Sigmoid colon (tissue), 7 donors: ENCODE measurements at regions of chr19 and their contacts with region 1.

Region 1: DNA sequence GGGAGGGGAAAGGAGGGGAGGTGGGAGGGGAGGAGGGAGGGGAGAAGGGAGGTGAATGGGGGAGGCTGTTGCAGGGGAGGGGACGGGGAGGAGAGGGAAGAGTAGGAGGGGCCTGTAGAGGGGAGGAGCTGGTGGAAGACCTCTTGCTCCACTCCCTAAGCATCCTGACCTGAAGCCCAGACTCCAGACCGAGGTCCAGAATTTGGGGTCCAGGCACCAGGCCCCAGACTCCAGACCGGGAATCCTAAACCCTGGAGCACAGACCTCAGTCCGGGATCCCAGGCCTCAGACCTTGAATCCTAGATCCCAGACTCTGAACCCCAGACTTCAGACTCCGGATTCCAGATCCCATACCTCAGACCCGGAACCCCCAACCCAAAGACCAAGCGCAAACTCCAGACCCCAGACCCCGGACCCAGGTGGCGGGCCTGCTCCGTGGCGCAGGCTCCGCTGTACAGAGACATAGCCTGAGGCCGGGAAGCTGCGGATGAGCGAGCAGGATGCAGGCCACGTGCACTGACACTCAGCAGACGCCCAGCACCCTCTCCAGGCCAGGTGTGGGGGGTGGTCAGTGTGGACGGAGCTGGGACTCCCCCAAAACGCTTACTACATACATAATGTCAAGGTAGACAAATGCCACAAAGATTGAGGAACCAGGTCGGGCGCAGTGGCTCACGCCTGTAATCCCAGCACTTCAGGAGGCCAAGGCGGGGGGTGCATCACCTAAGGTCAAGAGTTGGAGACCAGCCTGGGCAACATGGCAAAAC is 710 bp upstream of the BTBD2 start:
- DNase-seq: peak; percentile 97
- H3K4me3 ChIP-seq: peak overlapping the region in 3 of 4 donors; percentile 21 to 92 (median 76)
- H3K27ac ChIP-seq: peak overlapping the region; percentile 78 to 83 (median 80)
- H3K4me1 ChIP-seq: peaks cover 0 to 37% (median 35%) of the 10 kb centered on the region in 4 donors
- H3K27me3 ChIP-seq: no peaks in the 10 kb centered on the region
- CTCF ChIP-seq: no peak
- EP300 ChIP-seq: no peak
- POLR2A ChIP-seq: no peak

Region 2: DNA sequence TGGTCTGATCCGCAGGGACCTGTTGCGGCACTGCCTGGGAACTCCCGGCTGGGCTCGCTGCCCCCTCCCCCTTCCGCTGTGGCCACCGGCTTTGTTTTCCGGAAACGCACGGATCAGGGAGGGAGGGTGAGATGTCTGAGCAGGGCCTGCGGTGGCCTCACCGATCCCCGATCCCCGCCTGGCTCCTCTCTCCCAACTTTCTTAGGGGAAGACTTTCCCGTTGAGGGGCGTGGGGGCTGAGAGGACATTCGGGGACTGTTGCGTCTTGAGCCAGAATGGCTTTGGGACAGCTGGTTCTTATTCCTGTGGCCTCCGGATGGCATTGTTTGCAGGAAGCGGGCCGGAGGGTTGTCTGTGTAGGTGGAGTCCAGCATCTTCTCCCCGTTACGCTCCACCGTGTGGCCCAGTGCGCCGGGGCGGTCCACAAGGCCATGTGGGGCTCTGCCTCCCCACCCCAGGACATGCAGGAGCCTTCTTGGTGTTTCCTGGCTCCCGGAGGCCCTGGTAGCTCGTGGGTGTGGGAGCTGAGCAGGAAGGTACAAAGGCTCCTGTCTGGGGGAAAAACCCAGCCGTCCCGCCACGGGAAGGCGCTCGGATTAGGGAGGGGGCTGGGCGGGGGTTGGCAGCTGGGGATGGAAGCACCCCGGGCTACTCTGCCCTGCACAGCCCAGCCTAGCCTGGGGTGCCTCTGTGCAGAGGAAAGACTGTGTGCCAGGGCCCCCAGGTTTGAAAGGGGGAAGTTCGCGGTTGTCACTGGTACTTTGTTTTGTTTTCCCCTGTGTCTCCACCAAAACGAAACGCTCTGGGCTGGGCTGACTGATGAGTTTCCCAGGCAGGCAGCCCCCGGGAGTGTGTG is 73.9 kb before region 1 on chr19:
- intact Hi-C with region 1: loop called (anchors 2 kb)
- DNase-seq: peak; percentile 88
- H3K4me3 ChIP-seq: peak overlapping the region; percentile 70 to 83 (median 81)
- H3K27ac ChIP-seq: peak overlapping the region; percentile 85 to 99 (median 97)
- H3K4me1 ChIP-seq: peaks cover 0 to 43% (median 38%) of the 10 kb centered on the region in 4 donors
- H3K27me3 ChIP-seq: no peaks in the 10 kb centered on the region
- CTCF ChIP-seq: no peak
- EP300 ChIP-seq: no peak
- POLR2A ChIP-seq: no peak

Region 3: DNA sequence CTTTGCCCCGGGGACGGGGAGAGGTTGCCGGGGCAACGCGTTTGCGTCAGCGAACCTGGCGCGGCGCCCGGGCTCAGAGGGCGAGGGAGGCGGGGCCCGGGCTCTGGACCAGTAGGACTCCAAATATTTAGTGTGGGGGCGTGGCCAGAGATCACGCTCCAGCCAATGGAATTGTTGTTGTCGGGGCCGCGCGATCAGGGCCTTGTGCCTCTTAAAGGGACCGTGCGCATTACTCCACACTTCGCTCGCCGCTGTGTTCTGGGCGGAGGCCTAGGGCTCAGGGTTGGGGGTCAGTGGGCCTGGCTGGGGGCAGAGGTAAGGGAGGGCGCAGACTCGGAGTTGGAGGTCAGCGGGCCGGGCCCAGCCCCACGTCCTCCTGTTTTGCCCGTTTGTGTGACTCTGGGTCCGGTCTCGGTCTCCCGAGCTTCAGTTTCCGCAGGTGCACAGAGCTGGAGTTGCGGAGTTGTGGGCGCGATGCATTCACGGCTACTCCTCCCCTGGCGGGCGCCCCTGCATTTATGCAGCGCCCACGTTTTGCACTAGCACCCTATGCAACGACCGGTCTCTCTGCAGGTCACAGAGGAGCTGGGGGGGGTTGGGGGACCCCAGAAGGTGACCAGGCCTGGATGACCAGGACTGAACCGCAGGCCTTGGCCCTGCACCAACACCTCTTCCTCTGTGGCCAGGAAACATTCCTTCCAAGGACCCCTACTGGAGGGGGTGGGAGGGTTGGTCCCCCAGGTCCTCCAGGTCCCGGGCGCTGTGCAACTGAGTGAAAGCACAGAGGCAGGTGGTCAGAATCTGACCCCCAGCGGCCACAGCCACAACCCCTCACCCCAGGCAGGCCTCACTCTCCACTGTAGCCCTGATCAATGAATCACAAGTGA is 45.5 kb after region 1 on chr19:
- intact Hi-C with region 1: loop called (anchors 2 kb)
- DNase-seq: peak; percentile 100
- H3K4me3 ChIP-seq: peak overlapping the region; percentile 63 to 89 (median 72)
- H3K27ac ChIP-seq: peak overlapping the region; percentile 95 to 100 (median 100)
- H3K4me1 ChIP-seq: peaks cover 0 to 64% (median 58%) of the 10 kb centered on the region in 4 donors
- H3K27me3 ChIP-seq: no peaks in the 10 kb centered on the region
- CTCF ChIP-seq: no peak
- EP300 ChIP-seq: peak in 1 of 4 donors; percentile 71
- POLR2A ChIP-seq: peak; percentile 22 to 69

Region 4: DNA sequence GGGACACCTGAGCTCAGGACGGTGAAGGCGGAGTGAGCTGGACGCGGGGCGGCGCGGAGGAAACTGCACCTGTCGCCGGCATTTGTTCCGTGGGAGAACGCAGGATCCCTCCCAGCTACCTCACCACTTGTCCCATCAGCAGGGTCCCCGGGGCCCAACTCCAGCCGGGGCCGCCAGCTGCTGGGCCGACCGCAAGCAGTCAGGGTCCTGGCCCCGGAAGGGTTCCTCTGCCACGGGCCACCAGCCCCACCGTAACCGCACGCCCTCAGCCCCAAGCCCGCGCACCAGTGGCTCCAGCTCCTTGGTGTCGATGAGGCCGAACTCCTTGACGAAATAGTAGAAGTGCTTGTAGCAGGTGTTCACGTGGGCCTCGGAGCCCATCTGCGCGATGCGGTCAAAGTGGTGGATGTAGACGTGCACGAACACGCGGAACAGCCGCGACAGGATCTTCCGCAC is 60.3 kb after region 1 on chr19:
- intact Hi-C with region 1: no loop called
- DNase-seq: no peak
- H3K4me3 ChIP-seq: no peak overlapping the region
- H3K27ac ChIP-seq: no peak overlapping the region
- H3K4me1 ChIP-seq: peaks cover 0 to 13% (median 11%) of the 10 kb centered on the region in 4 donors
- H3K27me3 ChIP-seq: no peaks in the 10 kb centered on the region
- CTCF ChIP-seq: no peak
- EP300 ChIP-seq: no peak
- POLR2A ChIP-seq: no peak

Region 5: DNA sequence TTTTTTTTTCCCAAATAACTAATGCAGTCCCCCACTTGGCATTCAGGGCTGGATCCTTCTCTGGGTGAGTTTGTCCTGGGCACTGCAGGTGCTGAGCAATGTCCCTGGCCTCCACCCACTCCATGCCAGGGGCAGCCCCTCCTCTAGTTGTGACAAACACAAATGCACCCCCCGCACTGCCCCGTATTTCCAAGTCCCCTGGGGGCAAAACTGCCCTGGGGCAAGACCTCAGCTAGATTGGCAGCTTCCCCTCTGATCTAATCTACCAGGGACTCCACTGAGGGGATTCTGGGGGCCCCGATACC is 73.5 kb after region 1 on chr19:
- intact Hi-C with region 1: loop called (anchors 5 kb)
- DNase-seq: no peak
- H3K4me3 ChIP-seq: no peak overlapping the region
- H3K27ac ChIP-seq: peak overlapping the region; percentile 88 to 99 (median 93)
- H3K4me1 ChIP-seq: peaks cover 0 to 96% (median 85%) of the 10 kb centered on the region in 4 donors
- H3K27me3 ChIP-seq: no peaks in the 10 kb centered on the region
- CTCF ChIP-seq: no peak
- EP300 ChIP-seq: no peak
- POLR2A ChIP-seq: no peak

Region 6: DNA sequence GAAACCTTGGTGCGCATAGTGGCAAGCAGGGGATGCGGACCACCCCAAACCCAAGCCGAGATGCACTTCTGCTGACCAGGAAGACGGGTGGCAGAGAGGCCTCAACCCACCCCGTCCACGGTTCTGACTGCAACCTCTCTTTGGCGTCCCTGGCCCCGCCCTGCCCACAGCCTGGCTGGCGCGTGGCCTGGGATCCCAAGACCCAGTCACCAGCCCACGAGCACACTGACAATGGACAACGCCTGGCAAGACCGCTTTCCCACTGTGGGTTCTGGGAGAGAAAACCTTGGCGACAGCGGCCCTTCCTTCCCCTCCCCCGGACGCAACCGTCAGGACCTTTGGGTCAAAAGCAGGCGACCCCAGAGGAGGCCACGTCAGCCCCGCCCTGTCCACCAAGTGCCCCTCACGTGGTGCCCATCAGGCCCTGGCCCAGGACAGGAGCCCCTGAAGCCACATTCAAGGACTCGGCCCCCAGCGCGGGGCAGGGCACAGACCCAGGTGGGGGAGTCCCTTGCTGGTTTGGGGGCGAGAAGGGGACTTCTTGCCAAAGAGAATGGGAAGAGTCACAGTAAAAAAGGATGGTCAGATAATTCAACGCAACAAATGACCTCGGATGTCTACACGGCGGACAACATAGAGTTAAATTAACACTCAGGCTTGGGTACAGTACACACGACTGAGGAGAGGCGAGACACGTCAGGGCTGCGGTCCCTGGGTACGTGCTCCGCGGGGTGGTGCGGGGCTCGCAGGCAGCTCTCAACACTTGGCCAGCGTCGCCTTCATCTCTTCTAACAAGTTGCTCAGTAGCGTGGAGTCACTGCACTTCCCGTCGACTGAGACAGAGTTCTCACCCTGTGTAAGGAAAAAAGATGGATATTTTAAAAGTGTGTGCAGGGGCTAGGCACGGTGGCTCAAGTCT is 85.5 kb after region 1 on chr19:
- intact Hi-C with region 1: no loop called
- DNase-seq: no peak
- H3K4me3 ChIP-seq: no peak overlapping the region
- H3K27ac ChIP-seq: no peak overlapping the region
- H3K4me1 ChIP-seq: peaks cover 0 to 13% (median 10%) of the 10 kb centered on the region in 4 donors
- H3K27me3 ChIP-seq: no peaks in the 10 kb centered on the region
- CTCF ChIP-seq: no peak
- EP300 ChIP-seq: no peak
- POLR2A ChIP-seq: no peak